ENCODE measurements at regions of chr16 and their contacts with region 1.

Region 1: DNA sequence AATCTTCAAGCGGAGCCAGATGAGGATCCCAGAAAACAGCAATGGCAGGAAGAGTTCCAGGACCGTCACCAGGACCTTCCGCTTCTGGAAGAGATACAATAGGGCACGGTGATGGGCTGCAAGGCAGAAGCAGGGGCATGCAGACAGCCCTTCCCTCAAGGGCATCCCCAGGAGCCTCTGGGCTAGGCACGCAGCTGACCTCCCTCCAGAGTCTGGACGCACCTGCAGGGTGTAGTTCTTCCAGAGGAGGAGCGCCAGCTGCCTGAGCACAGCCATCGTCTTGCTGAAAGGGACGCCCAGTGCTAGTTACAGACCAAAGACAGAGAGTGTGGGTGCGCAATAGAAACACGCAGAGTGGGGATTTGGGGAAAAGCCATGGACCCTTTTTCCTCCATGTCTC is 14.3 kb downstream of the ABCA3 start:
- DNase-seq: no peak
- H3K4me3 ChIP-seq: no peak overlapping the region
- H3K27ac ChIP-seq: no peak overlapping the region
- H3K4me1 ChIP-seq: no peaks in the 10 kb centered on the region
- H3K27me3 ChIP-seq: no peaks in the 10 kb centered on the region
- CTCF ChIP-seq: no peak

Region 2: GRCh38 chr16:2531358-2531766 is 205.2 kb after region 1 on chr16 and contains the start of gene CEMP1:
- CTCF ChIA-PET with region 1: no interaction called
- POLR2A ChIA-PET with region 1: interaction called, 11 read pairs
- intact Hi-C with region 1: no loop called
- DNase-seq: no peak
- H3K4me3 ChIP-seq: peak within 1 kb of the TSS; percentile 61
- H3K27ac ChIP-seq: peak within 1 kb of the TSS; percentile 83
- H3K4me1 ChIP-seq: peaks cover 5% of the 10 kb centered on the region
- H3K27me3 ChIP-seq: no peaks in the 10 kb centered on the region
- CTCF ChIP-seq: no peak
- total RNA-seq, gene CEMP1: not detected in 2 replicates

Measured in A673 (cell line).